GM12878 (cell line): ENCODE measurements at regions of chr20 and their contacts with region 1.

Region 1: GRCh38 chr20:57622579-57623377 is 2.6 kb upstream of the ZBP1 start:
- DNase-seq: no peak
- ATAC-seq: peak; percentile 24
- H3K4me3 ChIP-seq: no peak overlapping the region
- H3K27ac ChIP-seq: no peak overlapping the region
- H3K4me1 ChIP-seq: peaks cover 40% of the 10 kb centered on the region
- H3K27me3 ChIP-seq: no peaks in the 10 kb centered on the region
- CTCF ChIP-seq: peak; percentile 64 to 93 (median 90)
- EP300 ChIP-seq: no peak
- POLR2A ChIP-seq: no peak
- RAD21 ChIP-seq: peak; percentile 73

Region 2: DNA sequence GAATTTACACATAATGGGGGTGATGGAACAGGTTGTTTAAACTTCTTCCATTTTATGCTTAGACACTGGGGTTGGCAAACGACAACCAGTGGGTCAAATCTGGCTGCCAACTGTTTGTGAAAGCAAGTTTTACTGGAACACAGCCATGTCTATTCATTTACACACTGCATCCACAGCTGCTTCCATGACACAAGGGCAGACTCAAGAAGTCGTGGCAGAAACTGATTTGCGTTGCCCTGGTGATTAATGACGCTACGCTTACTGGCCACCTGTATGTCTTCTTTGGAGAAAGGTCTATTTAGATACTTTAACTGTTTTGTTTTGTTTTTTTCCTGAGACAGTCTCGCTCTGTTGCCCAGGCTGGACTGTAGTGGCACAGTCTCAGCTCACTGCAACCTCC is 116.8 kb before region 1 on chr20:
- CTCF ChIA-PET with region 1: no interaction called
- POLR2A ChIA-PET with region 1: no interaction called
- RAD21 ChIA-PET with region 1: no interaction called
- SMC1A ChIA-PET with region 1: no interaction called
- in situ Hi-C with region 1: no loop called
- intact Hi-C with region 1: no loop called
- DNase-seq: no peak
- ATAC-seq: no peak
- H3K4me3 ChIP-seq: no peak overlapping the region
- H3K27ac ChIP-seq: no peak overlapping the region
- H3K4me1 ChIP-seq: peaks cover 13% of the 10 kb centered on the region
- H3K27me3 ChIP-seq: no peaks in the 10 kb centered on the region
- CTCF ChIP-seq: no peak
- EP300 ChIP-seq: no peak
- POLR2A ChIP-seq: no peak
- RAD21 ChIP-seq: no peak

Region 3: DNA sequence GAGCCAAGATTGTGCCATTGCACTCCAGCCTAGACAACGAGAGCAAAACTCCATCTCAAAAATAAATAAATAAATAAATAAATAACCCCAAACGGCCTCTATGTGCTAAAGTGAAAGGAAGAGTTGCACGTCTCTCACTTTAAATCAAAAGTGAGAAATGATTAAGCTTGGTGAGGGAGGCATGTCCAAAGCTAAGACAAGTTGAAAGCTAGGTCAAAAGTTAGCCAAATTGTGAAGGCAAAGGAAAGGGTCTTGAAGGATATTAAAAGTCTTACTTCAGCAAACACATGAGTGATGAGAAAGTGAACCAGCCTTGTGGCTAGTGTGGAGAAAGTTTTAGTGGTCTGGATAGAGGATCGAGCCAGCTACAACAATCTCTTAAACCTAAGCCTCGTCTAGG is 16.9 kb before region 1 on chr20:
- CTCF ChIA-PET with region 1: interaction called, 14 read pairs
- POLR2A ChIA-PET with region 1: interaction called, 6 read pairs
- RAD21 ChIA-PET with region 1: interaction called, 11 read pairs
- SMC1A ChIA-PET with region 1: interaction called, 11 read pairs
- in situ Hi-C with region 1: no loop called
- intact Hi-C with region 1: no loop called
- DNase-seq: no peak
- ATAC-seq: peak; percentile 55
- H3K4me3 ChIP-seq: no peak overlapping the region
- H3K27ac ChIP-seq: no peak overlapping the region
- H3K4me1 ChIP-seq: peaks cover 10% of the 10 kb centered on the region
- H3K27me3 ChIP-seq: no peaks in the 10 kb centered on the region
- CTCF ChIP-seq: no peak
- EP300 ChIP-seq: no peak
- POLR2A ChIP-seq: no peak
- RAD21 ChIP-seq: no peak

Region 4: DNA sequence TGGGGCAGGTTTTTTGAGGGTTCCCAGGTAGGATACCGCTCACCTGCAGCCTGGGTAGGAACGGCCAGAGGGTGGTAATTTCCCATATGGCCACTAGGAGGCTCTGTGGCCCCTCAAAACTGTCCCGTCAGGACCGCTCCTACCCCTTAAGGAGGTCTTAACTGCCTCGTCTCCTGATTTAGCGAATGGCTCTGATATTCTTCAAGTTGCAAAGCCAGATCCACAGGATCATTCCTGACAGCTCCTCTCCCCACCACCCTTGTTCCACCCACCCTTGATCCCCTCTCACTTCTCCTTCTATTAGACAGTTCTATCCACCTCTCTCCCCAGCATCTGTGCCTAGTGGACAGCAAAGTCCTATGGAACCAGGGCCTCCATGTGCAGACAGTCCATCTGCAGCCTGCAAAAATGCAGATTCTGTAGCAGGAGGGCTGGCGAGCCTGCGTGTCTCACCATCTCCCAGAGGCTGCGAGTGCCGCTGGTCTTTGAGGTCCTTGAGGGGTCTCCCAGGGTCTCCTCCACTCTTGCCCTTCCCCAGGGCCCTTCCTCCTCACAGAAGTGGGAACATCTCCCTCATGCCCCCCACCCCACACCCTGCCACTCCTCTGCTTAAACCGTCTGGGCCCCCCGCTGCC is 31.7 kb after region 1 on chr20:
- CTCF ChIA-PET with region 1: interaction called, 9 read pairs
- POLR2A ChIA-PET with region 1: no interaction called
- RAD21 ChIA-PET with region 1: interaction called, 10 read pairs
- SMC1A ChIA-PET with region 1: interaction called, 3 read pairs
- in situ Hi-C with region 1: no loop called
- intact Hi-C with region 1: no loop called
- DNase-seq: no peak
- ATAC-seq: peak; percentile 97
- H3K4me3 ChIP-seq: no peak overlapping the region
- H3K27ac ChIP-seq: no peak overlapping the region
- H3K4me1 ChIP-seq: no peaks in the 10 kb centered on the region
- H3K27me3 ChIP-seq: no peaks in the 10 kb centered on the region
- CTCF ChIP-seq: peak; percentile 88 to 96 (median 94)
- EP300 ChIP-seq: no peak
- POLR2A ChIP-seq: no peak
- RAD21 ChIP-seq: peak; percentile 93

Region 5: GRCh38 chr20:57680131-57680716 is 57.4 kb after region 1 on chr20:
- CTCF ChIA-PET with region 1: interaction called, 11 read pairs
- POLR2A ChIA-PET with region 1: interaction called, 8 read pairs
- RAD21 ChIA-PET with region 1: interaction called, 25 read pairs
- SMC1A ChIA-PET with region 1: interaction called, 9 read pairs
- in situ Hi-C with region 1: no loop called
- intact Hi-C with region 1: loop called (anchors 1 kb)
- DNase-seq: peak; percentile 86
- ATAC-seq: peak; percentile 77
- H3K4me3 ChIP-seq: peak overlapping the region; percentile 19; the same call in 1 of the 2 replicates
- H3K27ac ChIP-seq: peak overlapping the region; percentile 80
- H3K4me1 ChIP-seq: peaks cover 66% of the 10 kb centered on the region
- H3K27me3 ChIP-seq: no peaks in the 10 kb centered on the region
- CTCF ChIP-seq: no peak
- EP300 ChIP-seq: peak; percentile 94 to 95
- POLR2A ChIP-seq: no peak
- RAD21 ChIP-seq: no peak

Region 6: GRCh38 chr20:58087193-58087858 is 464.5 kb after region 1 on chr20:
- CTCF ChIA-PET with region 1: interaction called, 11 read pairs
- POLR2A ChIA-PET with region 1: no interaction called
- RAD21 ChIA-PET with region 1: interaction called, 9 read pairs
- SMC1A ChIA-PET with region 1: interaction called, 7 read pairs
- in situ Hi-C with region 1: no loop called
- intact Hi-C with region 1: no loop called
- DNase-seq: no peak
- ATAC-seq: peak; percentile 53; the same call in 1 of the 3 replicates
- H3K4me3 ChIP-seq: no peak overlapping the region
- H3K27ac ChIP-seq: no peak overlapping the region
- H3K4me1 ChIP-seq: no peaks in the 10 kb centered on the region
- H3K27me3 ChIP-seq: peaks cover 2 to 4% of the 10 kb centered on the region in 2 experiments; a peak in 3 of 4 replicates
- CTCF ChIP-seq: peak; percentile 68 to 86 (median 83)
- EP300 ChIP-seq: no peak
- POLR2A ChIP-seq: no peak
- RAD21 ChIP-seq: peak; percentile 66

Region 7: DNA sequence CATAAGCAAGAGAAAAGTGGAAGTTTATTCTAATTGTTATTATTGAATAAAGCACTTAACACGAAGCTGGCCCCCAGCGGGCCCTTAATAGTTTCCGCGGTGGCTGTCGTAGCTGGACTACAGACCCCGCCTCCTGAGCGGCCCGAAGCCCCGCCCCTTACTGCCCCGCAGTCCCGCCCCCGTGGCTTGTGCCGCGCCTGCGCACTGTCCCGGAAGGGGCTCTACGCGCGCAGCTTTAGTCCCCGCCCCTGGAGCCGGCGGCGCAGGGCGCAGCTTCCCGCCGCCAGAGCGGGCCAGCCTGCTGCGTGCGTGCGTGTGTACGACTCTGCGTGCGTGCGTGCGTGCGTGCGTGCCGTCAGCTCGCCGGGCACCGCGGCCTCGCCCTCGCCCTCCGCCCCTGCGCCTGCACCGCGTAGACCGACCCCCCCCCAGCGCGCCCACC is 766.1 kb after region 1 on chr20 and contains the start of gene VAPB:
- CTCF ChIA-PET with region 1: no interaction called
- POLR2A ChIA-PET with region 1: no interaction called
- RAD21 ChIA-PET with region 1: no interaction called
- SMC1A ChIA-PET with region 1: no interaction called
- in situ Hi-C with region 1: loop called (anchors 10 kb)
- intact Hi-C with region 1: no loop called
- DNase-seq: peak; percentile 88
- ATAC-seq: peak; percentile 98
- H3K4me3 ChIP-seq: peak within 1 kb of the TSS; percentile 81
- H3K27ac ChIP-seq: peak within 1 kb of the TSS; percentile 91
- H3K4me1 ChIP-seq: peaks cover 13% of the 10 kb centered on the region
- H3K27me3 ChIP-seq: no peaks in the 10 kb centered on the region
- CTCF ChIP-seq: no peak
- EP300 ChIP-seq: no peak
- POLR2A ChIP-seq: peak; percentile 87
- RAD21 ChIP-seq: no peak
- polyA plus RNA-seq, gene VAPB: 3.2 to 10.7 TPM